Testis (tissue), 5 donors: ENCODE measurements at regions of chr17 and their contacts with region 1.

Region 1: GRCh38 chr17:58112970-58113631 is 29.9 kb downstream of the DYNLL2 start:
- DNase-seq: peak; percentile 90
- H3K4me3 ChIP-seq: no peak overlapping the region
- H3K27ac ChIP-seq: no peak overlapping the region
- H3K4me1 ChIP-seq: no peaks in the 10 kb centered on the region
- H3K27me3 ChIP-seq: no peaks in the 10 kb centered on the region
- CTCF ChIP-seq: peak; percentile 80 to 93 (median 88)
- POLR2A ChIP-seq: no peak

Region 2: DNA sequence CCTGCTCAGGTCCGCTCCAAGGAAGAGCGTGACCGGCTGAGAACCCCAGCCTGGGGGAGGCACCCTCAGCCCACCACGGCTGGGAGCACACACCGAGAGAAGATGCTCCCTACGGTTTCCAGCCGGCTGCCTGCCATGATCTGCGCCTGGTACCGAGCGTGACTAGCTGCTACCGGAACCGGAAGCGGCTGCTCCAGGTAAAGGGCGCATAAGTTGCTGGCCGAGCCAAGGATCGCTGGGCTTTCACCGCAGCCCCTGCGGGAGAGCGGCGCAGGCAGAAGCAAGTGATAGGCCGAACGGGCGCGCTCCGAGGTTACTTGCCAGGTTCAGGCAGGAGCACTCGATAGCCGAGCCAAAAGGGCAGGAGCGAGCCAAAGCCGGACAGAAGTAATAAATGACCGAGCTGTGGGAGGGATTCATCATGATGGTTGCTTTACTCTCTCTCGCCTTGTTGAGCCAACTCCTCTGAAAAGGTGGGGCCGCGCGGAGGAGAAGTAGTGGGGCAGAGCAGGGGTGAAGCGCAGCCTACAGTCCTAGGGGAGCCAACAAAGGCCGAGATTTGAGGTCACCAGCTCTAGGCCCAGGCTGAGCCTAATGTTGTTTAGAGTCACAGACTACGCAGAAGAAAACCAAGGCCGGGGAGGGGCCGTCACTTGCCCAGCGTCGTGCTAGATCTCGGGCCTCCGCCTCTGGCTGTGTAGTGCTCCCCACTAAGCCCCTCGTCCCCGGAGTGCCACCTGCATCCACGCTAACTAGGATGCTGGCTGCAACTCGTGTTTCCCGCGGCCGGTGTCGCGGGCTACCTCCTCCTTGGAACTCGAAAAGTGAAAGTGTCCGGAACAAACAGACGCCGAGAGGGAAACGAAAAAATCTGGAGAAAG is 263.0 kb before region 1 on chr17 and contains the start of gene MRPS23:
- intact Hi-C with region 1: loop called (anchors 10 kb)
- DNase-seq: peak; percentile 99
- H3K4me3 ChIP-seq: peak within 1 kb of the TSS; percentile 80 to 93
- H3K27ac ChIP-seq: peak within 1 kb of the TSS; percentile 83 to 89
- H3K4me1 ChIP-seq: peaks cover 41% of the 10 kb centered on the region
- H3K27me3 ChIP-seq: no peaks in the 10 kb centered on the region
- CTCF ChIP-seq: peak in 1 of 3 experiments; percentile 17
- POLR2A ChIP-seq: peak; percentile 29
- total RNA-seq, gene MRPS23: 14.1 to 25.1 TPM